Endothelial cell of umbilical vein (primary cell): ENCODE measurements at regions of chr3 and their contacts with region 1.

Region 1: GRCh38 chr3:32912046-32912445 is 39.4 kb upstream of the CCR4 start:
- DNase-seq: no peak
- H3K4me3 ChIP-seq: no peak overlapping the region
- H3K27ac ChIP-seq: no peak overlapping the region
- H3K4me1 ChIP-seq: no peaks in the 10 kb centered on the region
- H3K27me3 ChIP-seq: peaks cover 0 to under 1% of the 10 kb centered on the region in 2 experiments
- CTCF ChIP-seq: no peak
- POLR2A ChIP-seq: no peak

Region 2: GRCh38 chr3:32157600-32158264 is 754.3 kb before region 1 on chr3:
- CTCF ChIA-PET with region 1: no interaction called
- POLR2A ChIA-PET with region 1: no interaction called
- dilution Hi-C with region 1: no loop called
- intact Hi-C with region 1: no loop called
- DNase-seq: no peak
- H3K4me3 ChIP-seq: no peak overlapping the region
- H3K27ac ChIP-seq: no peak overlapping the region
- H3K4me1 ChIP-seq: no peaks in the 10 kb centered on the region
- H3K27me3 ChIP-seq: no peaks in the 10 kb centered on the region
- CTCF ChIP-seq: no peak
- POLR2A ChIP-seq: no peak

Region 3: DNA sequence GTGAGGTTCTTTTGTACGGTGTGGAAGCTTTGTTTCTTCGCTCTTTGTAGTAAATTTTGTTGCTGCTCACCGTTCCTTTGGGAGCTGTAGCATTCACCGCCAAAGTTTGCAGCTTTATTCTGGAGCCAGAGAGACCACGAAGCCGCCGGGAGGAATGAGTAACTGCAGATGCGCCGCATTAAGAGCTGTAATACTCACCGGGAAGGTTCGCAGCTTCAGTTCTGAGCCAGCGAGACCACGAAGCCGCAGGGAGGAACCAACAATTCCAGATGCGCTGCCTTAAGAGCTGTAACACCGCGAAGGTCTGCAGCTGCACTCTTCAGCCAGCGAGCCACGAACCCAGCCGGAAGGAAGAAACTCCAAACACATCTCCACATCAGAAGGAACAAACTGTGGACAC is 285.4 kb before region 1 on chr3:
- CTCF ChIA-PET with region 1: no interaction called
- POLR2A ChIA-PET with region 1: no interaction called
- dilution Hi-C with region 1: no loop called
- intact Hi-C with region 1: no loop called
- DNase-seq: no peak
- H3K4me3 ChIP-seq: no peak overlapping the region
- H3K27ac ChIP-seq: no peak overlapping the region
- H3K4me1 ChIP-seq: no peaks in the 10 kb centered on the region
- H3K27me3 ChIP-seq: peaks cover 5 to 10% of the 10 kb centered on the region in 2 experiments
- CTCF ChIP-seq: no peak
- POLR2A ChIP-seq: no peak

Region 4: GRCh38 chr3:32778389-32778788 is 133.7 kb before region 1 on chr3:
- CTCF ChIA-PET with region 1: no interaction called
- POLR2A ChIA-PET with region 1: no interaction called
- dilution Hi-C with region 1: no loop called
- intact Hi-C with region 1: no loop called
- DNase-seq: no peak
- H3K4me3 ChIP-seq: no peak overlapping the region
- H3K27ac ChIP-seq: no peak overlapping the region
- H3K4me1 ChIP-seq: peaks cover 4% of the 10 kb centered on the region
- H3K27me3 ChIP-seq: no peaks in the 10 kb centered on the region
- CTCF ChIP-seq: no peak
- POLR2A ChIP-seq: no peak

Region 5: DNA sequence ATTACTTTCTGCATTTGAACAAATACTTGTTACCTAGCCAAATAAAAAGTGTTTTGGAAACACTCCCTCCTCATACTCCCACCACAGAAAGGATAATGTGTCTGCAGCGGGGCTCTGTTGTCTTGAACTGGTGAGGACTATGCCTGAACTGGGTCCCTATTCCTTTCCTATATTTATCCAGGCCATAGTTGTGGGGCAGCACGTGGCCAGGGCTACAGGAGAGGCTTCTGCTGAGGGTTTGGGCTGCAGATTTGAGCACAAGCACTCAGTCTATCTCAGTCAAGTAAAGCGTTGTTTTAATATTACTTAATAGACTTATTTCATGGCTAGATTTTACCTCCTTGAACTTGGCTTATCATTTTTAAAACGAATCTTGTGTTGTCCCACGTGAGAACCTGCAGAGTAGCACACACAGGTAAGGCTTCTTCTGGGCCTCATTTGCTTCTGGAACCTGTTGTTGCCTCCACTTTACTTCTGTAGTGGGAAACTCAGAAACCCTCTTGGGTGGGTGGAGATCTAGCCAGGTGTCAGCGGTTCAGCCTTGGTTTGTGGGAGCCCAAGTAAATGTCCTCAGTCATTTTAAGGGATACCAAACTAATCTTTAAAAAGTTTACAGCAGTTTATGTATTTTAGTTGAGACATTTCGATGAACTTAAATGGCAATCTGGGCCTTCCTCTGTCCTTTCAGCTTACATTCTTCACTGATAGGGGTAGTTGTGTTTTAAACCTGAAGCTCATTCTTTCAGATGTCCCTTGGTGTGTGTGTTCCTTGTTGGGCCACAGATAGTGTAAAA is 43.1 kb before region 1 on chr3:
- CTCF ChIA-PET with region 1: no interaction called
- POLR2A ChIA-PET with region 1: no interaction called
- dilution Hi-C with region 1: no loop called
- intact Hi-C with region 1: loop called (anchors 1 kb)
- DNase-seq: no peak
- H3K4me3 ChIP-seq: no peak overlapping the region
- H3K27ac ChIP-seq: no peak overlapping the region
- H3K4me1 ChIP-seq: no peaks in the 10 kb centered on the region
- H3K27me3 ChIP-seq: peaks cover 2 to 12% of the 10 kb centered on the region in 2 experiments
- CTCF ChIP-seq: no peak
- POLR2A ChIP-seq: no peak

Region 6: GRCh38 chr3:33035596-33035995 is 123.5 kb after region 1 on chr3:
- CTCF ChIA-PET with region 1: no interaction called
- POLR2A ChIA-PET with region 1: no interaction called
- dilution Hi-C with region 1: no loop called
- intact Hi-C with region 1: no loop called
- DNase-seq: peak; percentile 6
- H3K4me3 ChIP-seq: no peak overlapping the region
- H3K27ac ChIP-seq: peak overlapping the region; percentile 18
- H3K4me1 ChIP-seq: peaks cover 8% of the 10 kb centered on the region
- H3K27me3 ChIP-seq: no peaks in the 10 kb centered on the region
- CTCF ChIP-seq: no peak
- POLR2A ChIP-seq: no peak